Spleen (tissue), 13 donors: ENCODE measurements at regions of chrX and their contacts with region 1.

Region 1: GRCh38 chrX:34300871-34301270 is 168.8 kb upstream of the FAM47A start:
- DNase-seq: no peak
- H3K4me3 ChIP-seq: no peak overlapping the region
- H3K27ac ChIP-seq: no peak overlapping the region
- H3K4me1 ChIP-seq: no peaks in the 10 kb centered on the region
- H3K27me3 ChIP-seq: no peaks in the 10 kb centered on the region
- CTCF ChIP-seq: peak in 7 of 11 experiments; percentile 10 to 41 (median 24)
- POLR2A ChIP-seq: no peak

Region 2: DNA sequence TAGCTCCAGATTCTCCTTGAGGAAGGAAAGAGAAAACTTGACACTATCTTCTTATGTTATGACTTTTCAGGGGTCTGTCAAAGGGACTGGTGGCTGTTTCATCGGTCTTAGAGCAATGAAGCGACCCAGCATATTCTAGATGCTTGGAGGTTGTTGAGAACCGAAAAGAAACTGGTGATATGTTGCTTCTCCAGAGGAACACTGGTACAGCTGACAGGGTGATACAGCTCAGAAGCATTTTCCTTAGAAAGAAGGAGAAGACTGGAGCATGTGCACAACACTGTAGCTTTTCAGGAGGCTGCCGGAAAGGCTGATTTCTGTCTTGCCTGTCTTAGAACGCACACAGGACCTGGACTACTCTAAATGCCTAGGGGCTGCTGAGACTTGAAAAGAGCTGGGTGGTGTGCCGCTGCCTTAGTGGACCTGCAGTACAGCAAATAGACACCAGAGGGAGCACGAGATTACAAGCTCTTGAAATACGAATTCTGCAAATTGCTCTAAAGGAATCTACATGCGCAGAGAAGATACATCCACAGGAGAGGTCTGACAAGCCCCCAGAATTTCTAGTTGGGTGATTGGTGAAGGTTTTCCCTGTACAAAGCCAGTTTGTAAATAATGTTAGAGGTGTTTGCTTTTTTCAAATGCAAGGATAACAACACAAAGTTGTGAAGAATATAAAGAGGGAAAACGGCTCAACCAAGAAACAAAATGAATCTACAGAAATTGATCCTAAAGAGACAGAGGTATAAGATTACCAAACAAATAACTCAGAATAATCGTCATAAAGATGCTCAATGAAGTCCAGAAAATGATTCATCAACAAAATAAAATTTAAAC is 866.4 kb before region 1 on chrX:
- intact Hi-C with region 1: loop called (anchors 10 kb)
- DNase-seq: no peak
- H3K4me3 ChIP-seq: no peak overlapping the region
- H3K27ac ChIP-seq: no peak overlapping the region
- H3K4me1 ChIP-seq: no peaks in the 10 kb centered on the region
- H3K27me3 ChIP-seq: no peaks in the 10 kb centered on the region
- CTCF ChIP-seq: peak in 9 of 11 experiments; percentile 49 to 80 (median 67)
- POLR2A ChIP-seq: no peak